ENCODE measurements at regions of chr11 and their contacts with region 1.

Region 1: DNA sequence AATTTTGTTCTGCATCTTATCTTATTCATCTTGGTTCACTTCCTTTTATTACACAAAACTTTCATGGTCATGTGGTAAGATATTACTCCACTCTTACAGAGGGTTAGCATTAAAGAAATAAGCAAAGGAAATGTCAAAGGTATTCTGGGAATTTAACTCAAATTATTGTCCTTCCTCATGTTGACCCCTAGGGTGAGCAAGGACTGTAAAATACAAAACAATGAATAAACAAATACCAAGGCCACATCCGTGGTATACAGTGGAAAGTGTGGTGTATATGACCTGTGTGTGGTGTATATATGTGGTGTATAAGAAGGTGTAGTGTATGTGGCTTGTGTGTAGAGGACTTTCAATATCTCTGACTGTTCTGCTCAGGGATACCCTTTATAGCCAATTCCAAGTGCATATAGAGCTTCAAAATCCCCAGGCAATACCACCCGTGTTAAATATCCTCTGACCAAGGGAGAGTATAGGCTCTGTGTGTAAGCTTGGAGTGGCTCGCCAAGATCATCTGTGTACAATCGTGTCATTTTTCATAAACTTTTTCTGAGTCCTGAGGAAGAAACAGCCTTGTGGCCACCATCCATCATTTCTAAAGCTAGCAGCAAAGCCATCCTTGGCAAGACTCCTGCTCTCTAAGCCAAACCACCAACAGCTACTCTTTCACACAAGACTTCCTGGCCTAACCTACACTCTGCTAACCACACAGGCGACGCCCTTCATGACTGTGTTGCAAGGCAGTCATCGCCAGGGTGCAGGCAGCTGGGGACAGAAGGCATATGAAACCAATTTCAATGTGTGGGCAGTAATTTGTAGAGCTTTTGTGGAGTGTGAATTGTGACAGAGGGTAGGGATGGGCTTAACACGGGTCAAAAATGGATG is 548.0 kb downstream of the ETS1 start:
- DNase-seq: peak; percentile 94
- H3K4me3 Mint-ChIP-seq: peak overlapping the region; percentile 73
- H3K27ac Mint-ChIP-seq: peak overlapping the region; percentile 94
- H3K4me1 Mint-ChIP-seq: peaks cover 41% of the 10 kb centered on the region
- H3K27me3 Mint-ChIP-seq: no peaks in the 10 kb centered on the region

Region 2: GRCh38 chr11:128052912-128053641 is 13.7 kb after region 1 on chr11:
- intact Hi-C with region 1: loop called (anchors 1 kb)
- DNase-seq: peak; percentile 67
- H3K4me3 Mint-ChIP-seq: peak overlapping the region; percentile 63
- H3K27ac Mint-ChIP-seq: peak overlapping the region; percentile 81
- H3K4me1 Mint-ChIP-seq: peaks cover 48% of the 10 kb centered on the region
- H3K27me3 Mint-ChIP-seq: no peaks in the 10 kb centered on the region

Region 3: GRCh38 chr11:128093689-128094088 is 54.3 kb after region 1 on chr11:
- intact Hi-C with region 1: no loop called
- DNase-seq: peak; percentile 36
- H3K4me3 Mint-ChIP-seq: no peak overlapping the region
- H3K27ac Mint-ChIP-seq: no peak overlapping the region
- H3K4me1 Mint-ChIP-seq: peaks cover 5% of the 10 kb centered on the region
- H3K27me3 Mint-ChIP-seq: no peaks in the 10 kb centered on the region

Region 4: DNA sequence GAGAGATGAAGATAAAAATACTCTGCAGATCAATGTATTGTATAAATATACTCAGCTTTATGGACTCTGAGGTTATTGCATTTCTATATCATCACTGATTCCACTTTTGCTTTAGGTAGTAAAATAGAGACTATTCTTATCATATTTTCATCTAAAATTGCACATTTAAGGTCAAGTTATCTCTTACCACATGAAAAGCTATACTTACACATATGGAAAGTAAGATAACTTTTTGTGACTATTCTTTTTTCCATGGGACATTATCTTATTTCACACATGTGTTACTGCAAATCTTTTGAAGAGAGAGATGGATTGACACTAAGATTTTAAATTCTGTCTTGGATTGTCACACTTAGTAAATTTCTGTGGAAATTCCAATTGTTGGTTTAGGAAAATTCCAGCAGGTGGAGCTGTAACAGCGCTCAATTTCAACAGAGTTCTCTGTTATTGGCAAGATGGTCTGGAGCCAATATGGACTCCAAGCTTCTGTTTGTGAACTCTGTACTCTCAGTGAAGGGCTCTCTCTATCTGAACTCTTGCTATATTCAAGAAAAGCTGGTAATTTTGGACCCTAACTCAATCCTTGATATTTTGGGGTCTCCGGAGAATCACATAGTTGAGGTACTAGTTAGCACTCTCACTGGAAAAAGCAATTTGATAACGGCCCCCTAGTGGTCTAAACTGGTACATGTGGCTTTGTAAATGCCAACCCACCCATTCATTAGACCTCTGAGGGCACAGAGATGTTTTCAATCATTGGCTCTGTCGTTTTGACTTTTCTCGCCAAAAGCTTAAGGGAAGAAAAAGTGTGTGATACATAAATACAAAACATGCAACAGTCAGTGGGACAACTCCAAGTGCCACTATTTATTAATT is 118.3 kb after region 1 on chr11:
- intact Hi-C with region 1: loop called (anchors 2 kb)
- DNase-seq: peak; percentile 90
- H3K4me3 Mint-ChIP-seq: peak overlapping the region; percentile 63
- H3K27ac Mint-ChIP-seq: peak overlapping the region; percentile 78
- H3K4me1 Mint-ChIP-seq: peaks cover 10% of the 10 kb centered on the region
- H3K27me3 Mint-ChIP-seq: peaks cover 3% of the 10 kb centered on the region

Region 5: DNA sequence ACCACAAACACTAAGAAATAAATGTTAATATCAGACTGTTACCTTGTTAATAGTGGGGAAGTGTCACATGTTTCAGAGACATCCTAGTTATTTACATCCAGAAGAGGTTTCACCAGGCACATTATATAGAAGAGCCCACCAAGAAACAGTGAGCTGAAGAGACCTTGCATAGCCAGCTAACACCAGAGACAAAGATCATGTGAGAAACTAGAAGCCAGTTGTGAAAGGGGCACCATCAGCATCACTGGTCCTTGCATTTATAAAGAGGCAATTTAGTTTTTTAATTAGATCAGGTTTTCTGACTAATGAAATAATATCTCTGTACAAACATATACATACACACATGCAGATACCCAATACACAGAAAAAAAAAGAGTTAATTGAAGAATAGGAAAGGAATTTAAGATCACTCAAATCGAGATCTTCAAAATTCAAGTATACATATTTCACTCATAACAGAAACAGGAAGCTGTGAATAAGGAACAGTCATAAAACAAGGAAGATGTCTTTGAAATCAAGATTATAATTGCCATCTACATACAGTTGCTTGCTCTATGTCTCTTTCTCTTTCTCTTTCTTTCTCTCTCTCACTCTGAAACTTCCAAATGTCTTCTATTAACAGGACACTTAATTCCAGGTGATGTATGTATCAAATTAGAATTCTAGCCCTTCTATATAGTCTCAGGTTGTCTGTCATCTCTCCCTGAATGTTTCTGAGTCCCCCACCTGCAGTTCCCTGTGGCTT is 199.3 kb after region 1 on chr11:
- intact Hi-C with region 1: loop called (anchors 1 kb)
- DNase-seq: no peak
- H3K4me3 Mint-ChIP-seq: peak overlapping the region; percentile 45
- H3K27ac Mint-ChIP-seq: peak overlapping the region; percentile 63
- H3K4me1 Mint-ChIP-seq: peaks cover 24% of the 10 kb centered on the region
- H3K27me3 Mint-ChIP-seq: peaks cover 2% of the 10 kb centered on the region

Region 6: DNA sequence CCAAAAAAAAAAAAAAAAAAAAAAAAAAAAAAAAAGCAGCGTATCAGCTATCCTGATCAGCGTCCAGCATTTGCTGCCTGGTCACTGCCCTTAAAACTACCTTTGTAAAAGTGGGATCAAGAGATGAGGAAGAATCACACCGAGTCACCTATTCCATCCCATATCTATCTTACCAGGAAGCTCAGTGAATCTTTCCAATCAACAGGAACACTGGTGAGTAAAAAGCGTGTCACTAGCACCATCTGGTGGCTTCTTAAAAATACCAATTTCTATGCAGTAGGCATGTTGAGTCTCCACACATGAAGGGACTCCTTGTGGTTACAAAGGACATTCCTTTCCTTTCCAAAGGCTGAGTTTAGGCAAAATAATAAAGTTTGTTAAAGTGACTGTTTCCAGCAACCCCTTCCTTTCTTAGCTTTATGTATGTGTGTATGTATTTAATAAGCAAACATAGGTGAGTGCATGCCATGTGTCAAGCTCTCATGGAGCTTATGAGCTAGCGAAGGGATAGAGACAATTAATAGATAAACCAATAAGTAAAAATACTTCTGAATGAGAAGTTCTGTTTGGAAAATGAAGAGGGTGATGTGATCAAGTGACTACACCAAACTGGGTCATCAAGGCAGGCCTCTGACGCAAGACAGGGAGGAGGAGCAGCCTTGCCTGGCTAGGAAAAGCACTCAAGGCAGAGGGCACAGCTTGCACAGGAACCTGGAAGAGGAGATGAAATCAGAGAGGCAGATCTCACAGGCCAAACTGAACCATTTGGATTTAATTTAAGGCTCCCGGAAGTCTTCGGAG is 917.2 kb after region 1 on chr11:
- intact Hi-C with region 1: loop called (anchors 5 kb)
- DNase-seq: peak; percentile 75
- H3K4me3 Mint-ChIP-seq: no peak overlapping the region
- H3K27ac Mint-ChIP-seq: no peak overlapping the region
- H3K4me1 Mint-ChIP-seq: peaks cover 2% of the 10 kb centered on the region
- H3K27me3 Mint-ChIP-seq: peaks cover 18% of the 10 kb centered on the region